Endothelial cell of umbilical vein (primary cell): ENCODE measurements at regions of chr1 and their contacts with region 1.

Region 1: GRCh38 chr1:185170291-185170848 is 13.4 kb downstream of the SWT1 start:
- DNase-seq: peak; percentile 80
- H3K4me3 ChIP-seq: no peak overlapping the region
- H3K27ac ChIP-seq: no peak overlapping the region
- H3K4me1 ChIP-seq: peaks cover 6% of the 10 kb centered on the region
- H3K27me3 ChIP-seq: no peaks in the 10 kb centered on the region
- CTCF ChIP-seq: peak; percentile 61 to 65
- POLR2A ChIP-seq: no peak

Region 2: DNA sequence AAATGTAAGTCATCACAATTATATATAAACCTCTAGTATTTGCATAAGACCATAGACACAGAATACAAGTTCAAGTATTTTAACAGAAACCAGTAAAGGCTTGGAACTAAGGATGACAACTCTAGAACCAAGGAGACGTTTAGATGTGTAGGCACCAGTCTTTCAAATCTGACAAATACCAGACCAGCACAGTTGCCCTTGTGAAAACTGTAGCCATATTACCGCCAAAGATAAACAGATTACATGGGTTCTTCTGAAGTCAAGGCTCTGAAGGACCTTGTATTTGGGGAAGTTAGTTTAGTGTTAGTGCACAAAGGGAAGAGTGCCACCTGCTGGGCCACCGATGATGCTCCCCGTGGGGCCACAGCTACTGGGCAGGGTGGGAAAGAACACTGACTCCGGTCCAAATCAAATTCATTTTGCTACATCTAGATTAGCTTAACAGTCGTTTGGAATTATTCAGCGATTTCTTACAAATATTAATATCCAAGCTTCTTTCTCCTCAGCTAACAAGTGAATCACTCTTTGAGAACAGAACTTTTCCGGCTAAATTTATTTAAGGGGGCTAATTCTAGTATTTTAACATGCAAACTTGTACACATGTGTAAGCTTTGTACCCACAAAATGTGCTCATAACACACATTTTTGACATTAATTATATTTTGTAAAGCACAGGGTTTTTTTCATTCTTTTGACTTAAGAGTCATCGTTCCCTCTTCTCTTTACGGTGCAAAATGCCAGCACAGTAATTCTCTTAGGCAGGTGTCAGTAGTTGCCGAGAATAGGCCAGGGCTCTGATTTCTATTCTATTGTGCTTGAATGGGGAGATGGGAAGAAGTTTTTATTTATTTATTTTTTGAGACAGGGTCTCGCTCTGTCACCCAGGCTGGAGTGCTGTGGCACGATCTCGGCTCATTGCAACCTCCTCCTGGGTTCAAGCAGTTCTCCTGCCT is 188.1 kb before region 1 on chr1:
- CTCF ChIA-PET with region 1: interaction called, 49 read pairs
- POLR2A ChIA-PET with region 1: no interaction called
- dilution Hi-C with region 1: no loop called
- intact Hi-C with region 1: loop called (anchors 1 kb)
- DNase-seq: peak; percentile 64
- H3K4me3 ChIP-seq: no peak overlapping the region
- H3K27ac ChIP-seq: no peak overlapping the region
- H3K4me1 ChIP-seq: no peaks in the 10 kb centered on the region
- H3K27me3 ChIP-seq: peaks cover 6 to 12% of the 10 kb centered on the region in 2 experiments
- CTCF ChIP-seq: peak; percentile 81 to 88
- POLR2A ChIP-seq: no peak

Region 3: DNA sequence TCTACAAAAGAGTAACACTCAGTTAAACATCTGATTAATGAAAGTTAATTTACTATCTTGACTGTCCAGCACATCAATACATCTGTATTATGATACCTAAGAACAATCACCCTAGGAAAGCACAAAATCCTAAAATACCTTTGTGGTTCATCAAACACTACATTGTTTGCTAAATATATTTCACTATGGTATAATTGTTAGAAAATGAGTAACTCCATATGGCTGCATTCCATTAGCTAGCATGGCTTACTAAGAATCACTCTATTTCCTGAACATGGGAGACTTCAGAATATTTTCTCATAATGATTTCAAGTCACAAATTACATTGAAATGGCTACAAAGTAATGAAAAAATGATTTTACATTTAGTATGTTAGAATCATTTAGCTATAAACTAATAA is 26.1 kb before region 1 on chr1:
- CTCF ChIA-PET with region 1: interaction called, 18 read pairs
- POLR2A ChIA-PET with region 1: no interaction called
- dilution Hi-C with region 1: no loop called
- intact Hi-C with region 1: no loop called
- DNase-seq: peak; percentile 8
- H3K4me3 ChIP-seq: no peak overlapping the region
- H3K27ac ChIP-seq: no peak overlapping the region
- H3K4me1 ChIP-seq: no peaks in the 10 kb centered on the region
- H3K27me3 ChIP-seq: no peaks in the 10 kb centered on the region
- CTCF ChIP-seq: no peak
- POLR2A ChIP-seq: no peak

Region 4: DNA sequence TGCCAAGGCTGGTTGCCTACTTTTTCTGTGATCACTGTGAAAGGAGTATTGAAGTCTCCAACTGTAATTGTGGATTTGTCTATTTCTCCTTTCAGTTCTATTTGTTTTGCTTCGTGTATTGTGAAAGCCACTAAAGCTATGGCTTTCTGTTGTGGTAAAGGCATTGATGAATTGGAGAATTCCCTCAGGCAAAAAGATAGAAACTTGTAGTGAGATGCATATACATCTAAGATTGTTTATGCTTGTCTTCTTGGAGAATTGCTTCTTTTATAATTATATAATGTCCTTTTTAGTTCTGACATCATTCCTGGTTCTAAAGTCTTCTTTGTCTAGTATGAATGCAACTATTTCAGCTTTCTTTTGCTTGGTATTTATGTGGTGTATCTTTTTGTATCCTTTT is 23.4 kb after region 1 on chr1:
- CTCF ChIA-PET with region 1: interaction called, 33 read pairs
- POLR2A ChIA-PET with region 1: no interaction called
- dilution Hi-C with region 1: no loop called
- intact Hi-C with region 1: no loop called
- DNase-seq: no peak
- H3K4me3 ChIP-seq: no peak overlapping the region
- H3K27ac ChIP-seq: no peak overlapping the region
- H3K4me1 ChIP-seq: no peaks in the 10 kb centered on the region
- H3K27me3 ChIP-seq: no peaks in the 10 kb centered on the region
- CTCF ChIP-seq: no peak
- POLR2A ChIP-seq: no peak

Region 5: DNA sequence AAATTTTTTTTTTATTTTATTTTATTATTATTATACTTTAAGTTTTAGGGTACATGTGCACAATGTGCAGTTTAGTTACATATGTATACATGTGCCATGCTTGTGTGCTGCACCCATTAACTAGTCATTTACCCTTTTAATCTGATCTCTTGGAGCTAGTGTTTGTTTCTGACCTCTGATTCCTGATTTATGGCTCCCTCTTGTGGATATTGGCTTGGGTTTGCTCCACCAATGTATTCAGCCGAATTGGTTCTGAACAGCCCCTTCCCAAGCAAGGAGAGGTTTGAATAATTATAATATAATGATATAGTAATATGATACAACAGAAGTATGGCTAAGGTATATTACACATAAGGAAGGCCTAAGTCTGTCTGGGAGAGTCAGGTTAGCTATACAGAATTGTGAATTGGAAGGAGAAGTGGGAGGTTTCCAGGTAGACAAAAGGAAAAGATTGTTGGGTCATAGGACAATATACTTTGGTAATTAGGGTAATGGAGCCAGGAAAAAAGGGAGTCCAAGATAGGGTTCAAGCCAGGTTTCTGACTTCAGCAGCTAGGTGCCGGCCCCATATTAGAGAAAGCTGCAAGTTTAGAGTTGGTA is 510.8 kb after region 1 on chr1:
- CTCF ChIA-PET with region 1: interaction called, 33 read pairs
- POLR2A ChIA-PET with region 1: no interaction called
- dilution Hi-C with region 1: no loop called
- intact Hi-C with region 1: no loop called
- DNase-seq: peak; percentile 64
- H3K4me3 ChIP-seq: no peak overlapping the region
- H3K27ac ChIP-seq: no peak overlapping the region
- H3K4me1 ChIP-seq: peaks cover 8% of the 10 kb centered on the region
- H3K27me3 ChIP-seq: no peaks in the 10 kb centered on the region
- CTCF ChIP-seq: peak; percentile 48 to 50
- POLR2A ChIP-seq: no peak